Activated B cell treated with CpG ODN at 0.5 μM for 24 hours (primary cell): ENCODE measurements at regions of chr19 and their contacts with region 1.

Region 1: DNA sequence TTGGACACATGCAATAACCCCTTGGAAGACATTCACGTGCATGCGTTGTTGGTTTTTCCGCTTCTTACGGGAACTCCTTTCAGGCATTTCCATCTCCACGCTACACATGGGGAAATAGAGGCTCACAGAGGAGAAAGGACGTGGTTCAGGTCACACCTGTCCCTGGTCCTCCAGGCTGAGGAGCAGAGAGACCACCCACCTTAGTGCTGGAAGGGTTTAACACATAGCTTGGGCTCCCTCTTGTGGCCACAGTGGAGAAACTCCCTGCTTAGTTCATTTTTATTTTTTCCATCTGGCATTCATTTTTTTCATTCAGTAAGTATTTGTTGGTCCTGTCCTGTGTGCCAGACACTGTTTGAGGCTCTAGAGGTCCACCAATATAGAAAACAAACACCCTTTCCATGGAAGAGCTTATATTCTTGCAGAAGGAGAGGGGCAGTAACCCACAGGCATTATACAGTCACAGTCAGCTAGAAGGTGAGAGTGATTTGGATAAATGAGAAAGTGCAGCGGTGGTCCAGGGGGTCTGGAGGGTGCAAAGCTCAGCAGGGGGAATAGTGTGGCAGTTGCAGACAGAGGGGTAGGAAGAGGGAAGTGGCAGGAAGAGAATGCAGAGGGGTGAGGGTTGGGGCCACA is 24.2 kb upstream of the TTYH1 start:
- DNase-seq: peak; percentile 41
- ATAC-seq: peak; percentile 39
- H3K4me3 Mint-ChIP-seq: peak overlapping the region; percentile 70
- H3K27ac Mint-ChIP-seq: peak overlapping the region; percentile 75
- H3K4me1 Mint-ChIP-seq: peaks cover 50% of the 10 kb centered on the region
- H3K27me3 Mint-ChIP-seq: no peaks in the 10 kb centered on the region
- CTCF ChIP-seq: peak; percentile 81

Region 2: GRCh38 chr19:54266133-54266532 is 124.9 kb before region 1 on chr19:
- CTCF ChIA-PET with region 1: interaction called, 37 read pairs
- POLR2A ChIA-PET with region 1: no interaction called
- intact Hi-C with region 1: loop called (anchors 2 kb)
- DNase-seq: peak; percentile 60
- ATAC-seq: peak; percentile 71
- H3K4me3 Mint-ChIP-seq: no peak overlapping the region
- H3K27ac Mint-ChIP-seq: no peak overlapping the region
- H3K4me1 Mint-ChIP-seq: peaks cover 3% of the 10 kb centered on the region
- H3K27me3 Mint-ChIP-seq: peaks cover 19% of the 10 kb centered on the region
- CTCF ChIP-seq: no peak

Region 3: DNA sequence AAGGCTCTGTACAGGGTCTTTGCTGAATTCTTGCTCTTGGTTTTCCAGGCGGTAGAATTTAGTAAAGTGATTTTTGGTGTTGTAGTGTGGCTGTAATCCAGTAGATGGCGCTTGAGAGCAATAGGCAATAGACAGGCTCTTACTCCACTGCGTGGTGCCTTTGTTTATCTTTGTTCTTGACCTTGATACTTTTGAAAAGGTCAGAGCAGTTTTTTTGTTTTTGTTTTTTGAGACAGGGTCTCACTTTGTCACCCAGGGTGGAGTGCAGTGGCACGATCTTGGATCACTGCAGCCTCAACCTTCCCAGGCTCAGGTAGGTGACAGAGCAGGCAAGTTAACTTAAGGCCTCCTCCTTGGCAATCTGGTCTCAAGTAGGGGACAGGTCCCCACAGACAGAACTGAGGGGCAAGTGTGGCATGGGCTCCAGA is 65.9 kb before region 1 on chr19:
- CTCF ChIA-PET with region 1: interaction called, 80 read pairs
- POLR2A ChIA-PET with region 1: interaction called, 7 read pairs
- intact Hi-C with region 1: loop called (anchors 1 kb)
- DNase-seq: no peak
- ATAC-seq: peak; percentile 69
- H3K4me3 Mint-ChIP-seq: peak overlapping the region; percentile 32
- H3K27ac Mint-ChIP-seq: peak overlapping the region; percentile 56
- H3K4me1 Mint-ChIP-seq: peaks cover 54% of the 10 kb centered on the region
- H3K27me3 Mint-ChIP-seq: no peaks in the 10 kb centered on the region
- CTCF ChIP-seq: peak; percentile 84

Region 4: DNA sequence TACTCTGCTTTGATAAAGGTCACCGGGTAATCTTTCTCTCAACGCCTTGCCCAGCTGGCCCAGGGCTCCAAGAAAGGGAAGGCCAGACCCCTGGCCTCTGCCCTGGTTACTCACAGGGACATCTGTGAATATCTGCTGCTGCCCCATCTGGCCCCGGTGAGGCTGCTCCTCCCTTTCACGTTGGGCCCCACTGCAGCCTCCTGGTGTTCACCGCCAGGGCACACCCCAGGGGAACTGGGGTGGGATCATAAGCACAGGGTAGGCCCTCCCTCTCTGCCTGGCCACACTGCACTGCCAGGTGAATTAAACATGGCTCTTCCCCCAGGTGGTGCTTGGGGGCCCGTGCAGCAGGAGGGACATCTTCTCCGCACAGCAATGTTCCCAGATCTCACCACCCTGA is 39.0 kb before region 1 on chr19:
- CTCF ChIA-PET with region 1: interaction called, 33 read pairs
- POLR2A ChIA-PET with region 1: interaction called, 11 read pairs
- intact Hi-C with region 1: loop called (anchors 1 kb)
- DNase-seq: no peak
- ATAC-seq: peak; percentile 78
- H3K4me3 Mint-ChIP-seq: peak overlapping the region; percentile 36
- H3K27ac Mint-ChIP-seq: peak overlapping the region; percentile 83
- H3K4me1 Mint-ChIP-seq: peaks cover 62% of the 10 kb centered on the region
- H3K27me3 Mint-ChIP-seq: peaks cover 4% of the 10 kb centered on the region
- CTCF ChIP-seq: no peak

Region 5: GRCh38 chr19:54373781-54374631 is 17.1 kb before region 1 on chr19:
- CTCF ChIA-PET with region 1: interaction called, 10 read pairs
- POLR2A ChIA-PET with region 1: interaction called, 18 read pairs
- intact Hi-C with region 1: loop called (anchors 1 kb)
- DNase-seq: no peak
- ATAC-seq: no peak
- H3K4me3 Mint-ChIP-seq: no peak overlapping the region
- H3K27ac Mint-ChIP-seq: peak overlapping the region; percentile 76
- H3K4me1 Mint-ChIP-seq: peaks cover 86% of the 10 kb centered on the region
- H3K27me3 Mint-ChIP-seq: no peaks in the 10 kb centered on the region
- CTCF ChIP-seq: no peak